CD8-positive, alpha-beta memory T cell (primary cell): ENCODE measurements at regions of chr11 and their contacts with region 1.

Region 1: DNA sequence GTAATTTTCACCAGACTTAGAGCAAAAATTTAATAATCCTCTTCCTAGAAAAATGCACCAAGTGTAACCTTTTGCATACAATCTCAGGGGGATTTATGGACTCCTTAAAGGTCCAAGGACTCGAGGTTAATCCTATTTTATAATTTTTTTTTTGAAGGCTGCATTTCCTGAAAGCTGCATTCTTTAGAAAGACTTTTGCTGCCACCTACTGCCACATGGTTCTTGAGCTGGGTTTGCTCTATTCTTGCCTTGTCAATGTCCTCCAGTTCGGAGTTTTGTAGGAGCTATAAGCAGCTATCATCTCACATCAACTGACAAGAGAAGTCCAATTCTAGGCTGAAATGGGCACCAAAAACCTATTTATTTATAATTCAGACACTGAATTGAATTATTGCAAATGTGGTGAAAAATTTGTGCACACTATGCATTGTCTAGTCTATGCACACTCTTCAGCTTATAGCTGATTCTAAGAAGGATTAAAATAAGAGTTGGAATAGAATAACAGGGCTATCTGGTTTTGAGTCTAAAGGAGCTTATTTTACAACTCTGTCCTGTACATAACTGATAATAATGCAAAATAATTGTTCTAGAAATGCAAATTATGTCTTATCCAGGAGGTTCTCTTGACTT is 31.3 kb downstream of the TRAF6 start:
- DNase-seq: peak in 3 of 5 donors; percentile 14 to 30 (median 18)
- H3K4me3 ChIP-seq: no peak overlapping the region
- H3K4me3 Mint-ChIP-seq: no peak overlapping the region
- H3K27ac ChIP-seq: no peak overlapping the region
- H3K27ac Mint-ChIP-seq: no peak overlapping the region
- H3K4me1 ChIP-seq: no peaks in the 10 kb centered on the region
- H3K4me1 Mint-ChIP-seq: peaks cover 5 to 13% (median 13%) of the 10 kb centered on the region in 3 donors
- H3K27me3 ChIP-seq: no peaks in the 10 kb centered on the region
- H3K27me3 Mint-ChIP-seq: no peaks in the 10 kb centered on the region

Region 2: GRCh38 chr11:36354221-36355003 is 124.4 kb before region 1 on chr11:
- CTCF ChIA-PET with region 1: interaction called, 33 read pairs
- POLR2A ChIA-PET with region 1: no interaction called
- DNase-seq: no peak
- H3K4me3 ChIP-seq: no peak overlapping the region
- H3K4me3 Mint-ChIP-seq: peak overlapping the region in 2 of 7 donors; percentile 10 to 52
- H3K27ac ChIP-seq: no peak overlapping the region
- H3K27ac Mint-ChIP-seq: peak overlapping the region in 7 of 8 donors; percentile 20 to 91 (median 72)
- H3K4me1 ChIP-seq: peaks cover 23% of the 10 kb centered on the region
- H3K4me1 Mint-ChIP-seq: peaks cover 46 to 83% (median 75%) of the 10 kb centered on the region in 3 donors
- H3K27me3 ChIP-seq: no peaks in the 10 kb centered on the region
- H3K27me3 Mint-ChIP-seq: peaks cover 0 to 9% of the 10 kb centered on the region in 2 donors

Region 3: DNA sequence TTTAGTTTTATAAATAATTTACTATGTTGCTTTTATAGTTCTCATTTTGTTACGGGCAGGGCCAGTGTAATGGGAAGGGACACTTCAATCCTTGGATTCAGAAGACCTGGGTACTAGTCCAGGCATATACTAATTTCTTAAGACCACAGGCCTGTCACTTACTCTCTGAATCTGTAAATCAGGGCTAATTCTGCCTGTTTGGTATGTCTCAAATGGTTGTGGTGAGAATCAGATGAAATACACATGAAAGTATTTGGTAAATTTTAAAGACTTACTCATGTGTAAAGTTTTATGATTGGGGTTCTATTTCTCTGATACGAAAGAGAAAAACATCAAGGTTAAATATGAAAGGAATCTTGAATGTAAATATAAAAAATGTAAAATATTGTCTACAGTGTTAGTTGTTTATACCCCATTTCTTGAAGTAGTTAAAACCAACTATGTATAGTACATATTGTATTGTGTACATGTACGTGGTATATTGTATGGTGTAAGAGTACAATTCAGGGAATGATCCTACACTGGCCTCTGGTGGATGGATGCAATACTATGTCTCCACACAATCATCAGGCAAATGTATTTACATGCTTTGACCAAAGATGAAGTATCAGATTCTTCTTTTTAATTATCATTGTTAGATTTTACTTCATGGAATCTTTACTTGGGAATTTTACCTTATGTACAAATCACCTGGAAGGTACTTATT is 143.8 kb after region 1 on chr11:
- CTCF ChIA-PET with region 1: no interaction called
- POLR2A ChIA-PET with region 1: no interaction called
- DNase-seq: no peak
- H3K4me3 ChIP-seq: no peak overlapping the region
- H3K4me3 Mint-ChIP-seq: no peak overlapping the region
- H3K27ac ChIP-seq: no peak overlapping the region
- H3K27ac Mint-ChIP-seq: no peak overlapping the region
- H3K4me1 ChIP-seq: no peaks in the 10 kb centered on the region
- H3K4me1 Mint-ChIP-seq: peaks cover 1 to 12% (median 5%) of the 10 kb centered on the region in 3 donors
- H3K27me3 ChIP-seq: peaks cover 4% of the 10 kb centered on the region
- H3K27me3 Mint-ChIP-seq: peaks cover 12 to 37% of the 10 kb centered on the region in 2 donors